ENCODE measurements at regions of chr6 and their contacts with region 1.

Region 1: GRCh38 chr6:166956444-166957086 is at the start of gene RNASET2:
- DNase-seq: peak; percentile 98
- ATAC-seq: peak; percentile 88
- H3K4me3 Mint-ChIP-seq: peak within 1 kb of the TSS; percentile 78
- H3K27ac Mint-ChIP-seq: peak within 1 kb of the TSS; percentile 72; the same call in 1 of the 2 replicates
- H3K4me1 Mint-ChIP-seq: peaks cover 33% of the 10 kb centered on the region
- H3K27me3 Mint-ChIP-seq: peaks cover 12% of the 10 kb centered on the region
- CTCF ChIP-seq: no peak
- total RNA-seq, gene RNASET2: 35.6 to 44.3 TPM (median 41.9 TPM) in 3 replicates

Region 2: GRCh38 chr6:166671434-166672081 is 285.0 kb before region 1 on chr6:
- CTCF ChIA-PET with region 1: no interaction called
- POLR2A ChIA-PET with region 1: no interaction called
- DNase-seq: no peak
- ATAC-seq: peak; percentile 38
- H3K4me3 Mint-ChIP-seq: no peak overlapping the region
- H3K27ac Mint-ChIP-seq: no peak overlapping the region
- H3K4me1 Mint-ChIP-seq: peaks cover 20% of the 10 kb centered on the region
- H3K27me3 Mint-ChIP-seq: peaks cover 5% of the 10 kb centered on the region
- CTCF ChIP-seq: no peak

Region 3: GRCh38 chr6:166989427-166990032 is 33.0 kb after region 1 on chr6:
- CTCF ChIA-PET with region 1: interaction called, 18 read pairs
- POLR2A ChIA-PET with region 1: no interaction called
- DNase-seq: peak; percentile 16
- ATAC-seq: peak; percentile 62
- H3K4me3 Mint-ChIP-seq: no peak overlapping the region
- H3K27ac Mint-ChIP-seq: peak overlapping the region; percentile 5; the same call in 1 of the 2 replicates
- H3K4me1 Mint-ChIP-seq: peaks cover 38% of the 10 kb centered on the region
- H3K27me3 Mint-ChIP-seq: no peaks in the 10 kb centered on the region
- CTCF ChIP-seq: no peak

Region 4: GRCh38 chr6:167005350-167006159 is 49.0 kb after region 1 on chr6:
- CTCF ChIA-PET with region 1: no interaction called
- POLR2A ChIA-PET with region 1: interaction called, 12 read pairs
- DNase-seq: no peak
- ATAC-seq: no peak
- H3K4me3 Mint-ChIP-seq: no peak overlapping the region
- H3K27ac Mint-ChIP-seq: no peak overlapping the region; the same call in 1 of the 2 replicates
- H3K4me1 Mint-ChIP-seq: peaks cover 13% of the 10 kb centered on the region
- H3K27me3 Mint-ChIP-seq: no peaks in the 10 kb centered on the region
- CTCF ChIP-seq: no peak